ENCODE measurements at regions of chr11 and their contacts with region 1.

Region 1: GRCh38 chr11:75022759-75023396 is 34.1 kb downstream of the NEU3 start:
- DNase-seq: peak; percentile 71 to 84 (median 78)
- ATAC-seq: peak; percentile 86 to 93 (median 90)
- H3K4me3 ChIP-seq: no peak overlapping the region
- H3K27ac ChIP-seq: peak overlapping the region in 6 of 12 donors; percentile 17 to 64 (median 39)
- H3K4me1 ChIP-seq: peaks cover 0 to 22% (median 5%) of the 10 kb centered on the region in 12 donors
- H3K27me3 ChIP-seq: no peaks in the 10 kb centered on the region
- CTCF ChIP-seq: peak; percentile 81 to 97 (median 94)
- POLR2A ChIP-seq: no peak

Region 2: GRCh38 chr11:74941308-74941891 is 81.5 kb before region 1 on chr11:
- intact Hi-C with region 1: loop called in 2 of 10 experiments (anchors 5 kb)
- DNase-seq: no peak
- ATAC-seq: peak in 3 of 4 donors; percentile 33 to 56 (median 47)
- H3K4me3 ChIP-seq: no peak overlapping the region
- H3K27ac ChIP-seq: no peak overlapping the region
- H3K4me1 ChIP-seq: peaks cover 0 to 10% (median 0%) of the 10 kb centered on the region in 12 donors
- H3K27me3 ChIP-seq: no peaks in the 10 kb centered on the region
- CTCF ChIP-seq: no peak
- POLR2A ChIP-seq: no peak

Region 3: DNA sequence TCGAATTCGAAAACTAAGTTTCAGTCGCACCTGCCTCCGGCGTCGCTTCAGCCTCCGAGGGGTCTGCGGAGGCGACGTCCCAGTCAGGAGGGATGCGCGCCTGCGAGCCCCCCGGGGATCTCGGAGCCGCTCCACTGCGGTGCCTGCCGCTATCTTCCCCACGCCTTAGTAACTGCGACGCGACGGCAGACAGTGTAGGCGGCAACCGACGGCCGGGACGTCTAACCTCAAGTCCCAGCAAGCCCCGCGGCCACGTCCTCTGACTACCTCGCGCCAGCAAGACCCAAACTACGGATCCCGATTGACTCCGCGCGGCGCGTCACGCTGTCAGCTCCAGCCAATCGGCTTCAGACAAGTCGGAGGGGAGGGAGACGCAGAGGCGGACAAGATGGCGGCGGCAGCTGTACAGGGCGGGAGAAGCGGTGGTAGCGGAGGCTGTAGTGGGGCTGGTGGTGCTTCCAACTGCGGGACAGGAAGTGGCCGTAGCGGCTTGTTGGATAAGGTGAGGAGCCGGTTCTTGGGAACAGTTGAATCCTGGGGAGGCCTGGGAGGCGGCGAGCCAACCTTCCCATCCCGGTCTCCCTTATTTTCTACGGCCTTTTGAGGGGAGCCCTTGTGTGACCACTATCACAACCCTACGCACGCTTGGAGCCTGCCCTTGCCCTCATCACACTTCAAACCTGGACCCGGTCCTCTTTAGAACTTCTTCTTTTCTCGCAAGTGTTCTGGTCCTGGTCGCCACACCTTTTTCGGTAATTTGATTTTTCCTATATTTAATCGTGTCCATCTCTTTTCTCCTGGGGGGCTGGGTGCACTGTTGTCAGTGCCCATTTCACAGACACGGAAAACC is 73.8 kb before region 1 on chr11 and contains the starts of genes SPCS2 and XRRA1:
- intact Hi-C with region 1: loop called in 2 of 10 experiments (anchors 5 kb)
- DNase-seq: peak; percentile 99 to 100 (median 99)
- ATAC-seq: peak; percentile 99 to 100 (median 99)
- H3K4me3 ChIP-seq: peak within 1 kb of the TSS; percentile 72 to 96 (median 84)
- H3K27ac ChIP-seq: peak within 1 kb of the TSS; percentile 5 to 91 (median 88)
- H3K4me1 ChIP-seq: peaks cover 0 to 56% (median 34%) of the 10 kb centered on the region in 12 donors
- H3K27me3 ChIP-seq: no peaks in the 10 kb centered on the region
- CTCF ChIP-seq: no peak
- POLR2A ChIP-seq: peak; percentile 61 to 78
- total RNA-seq, gene SPCS2: 21.8 to 136 (median 109) TPM
- total RNA-seq, gene XRRA1: 5.3 to 26.6 (median 13.4) TPM

Region 4: DNA sequence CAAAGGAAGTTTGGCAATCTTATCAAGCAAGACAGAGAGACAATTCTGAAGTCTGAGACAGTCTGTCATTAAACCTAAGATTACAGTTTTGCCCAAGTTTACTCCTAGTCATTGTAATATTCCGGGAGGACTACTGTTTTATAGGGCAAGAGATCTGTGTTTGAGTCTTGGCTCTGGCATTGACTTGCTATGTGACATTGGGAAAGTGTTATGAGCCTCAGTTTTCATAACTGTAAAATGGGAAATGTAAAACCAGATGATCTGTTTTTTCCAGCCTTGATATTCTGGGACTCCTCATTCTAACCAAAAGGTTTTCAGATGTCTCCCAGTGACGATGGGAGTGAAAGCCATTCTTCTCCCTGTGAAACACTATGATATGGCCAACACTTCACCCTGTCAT is 103.7 kb after region 1 on chr11:
- intact Hi-C with region 1: no loop called
- DNase-seq: no peak
- ATAC-seq: no peak
- H3K4me3 ChIP-seq: no peak overlapping the region
- H3K27ac ChIP-seq: no peak overlapping the region
- H3K4me1 ChIP-seq: no peaks in the 10 kb centered on the region
- H3K27me3 ChIP-seq: peaks cover 0 to 14% (median 5%) of the 10 kb centered on the region in 9 donors
- CTCF ChIP-seq: no peak
- POLR2A ChIP-seq: no peak

Region 5: GRCh38 chr11:75241036-75241905 is 218.4 kb after region 1 on chr11:
- intact Hi-C with region 1: loop called in 4 of 10 experiments (anchors 2 to 5 kb)
- DNase-seq: peak; percentile 82 to 95 (median 84)
- ATAC-seq: peak; percentile 56 to 97 (median 92)
- H3K4me3 ChIP-seq: peak overlapping the region; percentile 7 to 60 (median 44)
- H3K27ac ChIP-seq: no peak overlapping the region
- H3K4me1 ChIP-seq: peaks cover 0 to 21% (median 5%) of the 10 kb centered on the region in 12 donors
- H3K27me3 ChIP-seq: peaks cover 21 to 59% (median 34%) of the 10 kb centered on the region in 9 donors
- CTCF ChIP-seq: peak; percentile 29 to 99 (median 88)
- POLR2A ChIP-seq: no peak

Region 6: GRCh38 chr11:75248690-75249268 is 225.9 kb after region 1 on chr11:
- intact Hi-C with region 1: loop called in 9 of 10 experiments (anchors 2 to 5 kb)
- DNase-seq: peak; percentile 84 to 91 (median 87)
- ATAC-seq: peak; percentile 88 to 94 (median 92)
- H3K4me3 ChIP-seq: no peak overlapping the region
- H3K27ac ChIP-seq: no peak overlapping the region
- H3K4me1 ChIP-seq: peaks cover 0 to 3% (median 0%) of the 10 kb centered on the region in 12 donors
- H3K27me3 ChIP-seq: peaks cover 0 to 21% (median 5%) of the 10 kb centered on the region in 9 donors
- CTCF ChIP-seq: peak in 11 of 12 donors; percentile 95 to 100 (median 99)
- POLR2A ChIP-seq: no peak

Measured in heart left ventricle (tissue), 16 donors.